Activated naive CD4-positive, alpha-beta T cell treated with anti-CD3 and anti-CD28 coated beads for 36 hours (primary cell): ENCODE measurements at regions of chr22 and their contacts with region 1.

Region 1: DNA sequence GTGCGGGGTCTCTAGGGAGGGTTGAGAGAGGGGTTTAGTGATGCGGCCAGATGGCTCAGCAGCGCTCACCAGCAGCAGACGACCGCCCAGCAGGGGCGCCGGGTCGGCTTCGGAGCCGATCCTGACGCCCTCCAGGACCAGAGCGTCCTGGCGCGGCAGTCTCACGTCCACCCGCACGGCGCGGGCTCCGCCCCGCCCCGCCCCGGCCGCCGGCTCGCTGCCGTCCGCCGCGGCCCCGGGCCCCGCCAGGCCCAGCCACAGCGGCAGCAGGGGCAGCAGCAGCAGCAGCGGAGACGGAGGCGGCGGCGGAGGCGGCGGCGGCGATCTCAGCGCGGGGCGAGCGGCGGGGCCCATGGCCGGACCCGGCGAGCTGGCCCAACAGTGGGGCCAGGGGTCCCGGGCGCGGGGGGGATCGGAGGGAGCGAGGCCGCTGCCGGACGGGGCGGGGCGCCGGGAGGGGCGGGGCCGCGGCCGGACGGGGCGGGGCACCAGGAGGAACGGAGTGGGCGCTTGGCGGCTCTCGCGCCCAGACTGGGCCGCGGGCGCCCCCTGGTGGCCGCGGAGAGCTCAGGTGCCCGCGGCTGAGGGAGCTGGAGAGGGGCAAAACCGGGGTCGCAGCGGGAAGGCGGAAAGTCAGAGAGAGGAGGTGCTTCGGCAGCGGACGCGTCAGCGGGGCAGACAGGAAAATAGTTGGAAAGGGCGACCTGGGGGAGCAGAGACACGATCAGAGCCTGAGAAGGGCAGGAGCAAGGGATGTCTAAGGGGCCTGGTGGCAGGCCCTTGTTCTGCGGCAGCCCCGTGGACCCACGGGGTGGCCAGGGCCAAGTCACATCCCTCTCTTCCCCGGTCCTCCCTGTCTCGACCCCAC is at the start of gene RNF215:
- DNase-seq: peak; percentile 68
- H3K4me3 Mint-ChIP-seq: peak within 1 kb of the TSS; percentile 74
- H3K27ac Mint-ChIP-seq: no peak within 1 kb of the TSS
- H3K4me1 Mint-ChIP-seq: peaks cover 13% of the 10 kb centered on the region
- H3K27me3 Mint-ChIP-seq: no peaks in the 10 kb centered on the region
- total RNA-seq, gene RNF215: 2.8 to 3.9 TPM

Region 2: DNA sequence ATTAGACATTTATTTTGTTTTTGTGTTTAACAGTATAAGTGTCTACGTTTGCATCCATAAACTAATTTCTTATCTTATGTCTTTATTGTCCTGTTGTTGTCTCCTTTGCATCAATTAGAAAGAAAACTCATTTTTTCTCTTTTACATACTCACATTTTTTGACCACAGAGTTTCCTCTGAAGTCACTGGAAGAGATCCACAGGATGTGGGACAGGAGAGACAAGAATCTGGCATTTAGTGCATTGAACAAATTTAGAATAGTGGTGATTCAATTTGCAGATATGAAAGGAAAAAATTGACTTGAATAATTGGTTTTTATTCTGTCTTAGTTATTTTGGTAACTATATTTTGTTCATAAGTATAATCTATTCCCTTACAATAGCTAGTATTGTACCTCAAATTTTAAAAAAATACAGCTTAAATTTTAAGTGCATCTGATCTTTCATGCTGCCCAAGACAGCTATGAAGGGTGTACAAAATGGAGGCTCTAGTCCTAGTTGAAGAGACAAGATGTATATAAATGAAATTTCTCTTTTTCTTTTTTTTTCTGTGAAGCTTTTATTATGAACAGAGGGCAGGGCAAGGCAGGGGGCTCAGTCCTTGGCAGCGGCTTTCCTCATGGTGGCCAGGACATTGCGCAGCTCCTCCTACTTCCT is 282.6 kb before region 1 on chr22:
- CTCF ChIA-PET with region 1: interaction called, 6 read pairs
- intact Hi-C with region 1: loop called (anchors 2 kb)
- DNase-seq: no peak
- H3K4me3 Mint-ChIP-seq: no peak overlapping the region
- H3K27ac Mint-ChIP-seq: peak overlapping the region; percentile 24
- H3K4me1 Mint-ChIP-seq: peaks cover 38% of the 10 kb centered on the region
- H3K27me3 Mint-ChIP-seq: no peaks in the 10 kb centered on the region

Region 3: GRCh38 chr22:30356449-30357235 is 30.6 kb before region 1 on chr22 and contains the starts of genes CCDC157 and SF3A1:
- CTCF ChIA-PET with region 1: interaction called, 7 read pairs
- intact Hi-C with region 1: loop called (anchors 2 kb)
- DNase-seq: peak; percentile 87
- H3K4me3 Mint-ChIP-seq: peak within 1 kb of the TSS; percentile 92
- H3K27ac Mint-ChIP-seq: peak within 1 kb of the TSS; percentile 84
- H3K4me1 Mint-ChIP-seq: peaks cover 50% of the 10 kb centered on the region
- H3K27me3 Mint-ChIP-seq: no peaks in the 10 kb centered on the region
- total RNA-seq, gene CCDC157: 1.1 to 1.5 TPM
- total RNA-seq, gene SF3A1: 274 to 276 TPM

Region 4: GRCh38 chr22:30423982-30424963 is 37.1 kb after region 1 on chr22:
- CTCF ChIA-PET with region 1: interaction called, 66 read pairs
- intact Hi-C with region 1: loop called (anchors 1 kb)
- DNase-seq: peak; percentile 99
- H3K4me3 Mint-ChIP-seq: peak overlapping the region; percentile 97
- H3K27ac Mint-ChIP-seq: peak overlapping the region; percentile 96
- H3K4me1 Mint-ChIP-seq: peaks cover 50% of the 10 kb centered on the region
- H3K27me3 Mint-ChIP-seq: no peaks in the 10 kb centered on the region

Region 5: DNA sequence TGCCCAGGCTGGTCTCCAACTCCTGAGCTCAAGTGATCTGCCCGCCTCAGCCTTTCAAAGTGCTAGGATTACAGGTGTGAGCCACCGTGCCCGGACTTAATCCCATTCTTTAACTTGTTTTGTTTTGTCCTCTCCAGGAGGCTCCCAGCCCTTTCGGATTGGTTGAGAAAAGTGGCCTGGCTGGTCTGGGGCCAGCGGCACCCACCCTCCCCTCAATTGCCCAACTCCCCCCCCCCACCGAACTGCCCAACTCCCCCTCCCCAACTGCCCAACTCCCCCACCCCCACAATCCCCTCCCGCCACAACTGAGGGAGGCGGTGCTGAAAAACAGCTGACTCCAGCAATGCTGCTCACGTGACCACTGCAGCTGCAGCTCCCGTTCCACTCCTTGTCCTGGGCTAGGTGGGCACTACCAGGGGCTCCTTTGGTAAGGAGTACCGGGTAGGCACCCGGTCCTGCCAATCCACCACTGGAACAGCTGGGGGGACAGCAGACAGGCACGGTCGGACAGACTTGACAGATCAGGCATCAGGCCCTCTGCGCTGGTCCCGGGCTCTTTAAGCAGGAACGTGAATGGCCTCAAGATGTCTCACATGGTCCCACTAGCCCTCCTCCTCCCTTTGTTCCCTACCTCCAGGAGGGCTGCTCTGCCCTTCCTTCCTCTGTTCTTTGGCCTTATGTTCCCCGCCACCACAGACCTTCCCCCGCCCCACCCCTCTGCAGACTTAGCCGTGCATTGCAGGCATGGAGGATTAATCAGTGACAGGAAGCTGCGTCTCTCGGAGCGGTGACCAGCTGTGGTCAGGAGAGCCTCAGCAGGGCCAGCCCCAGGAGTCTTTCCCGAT is 219.5 kb after region 1 on chr22 and contains the start of gene TCN2:
- CTCF ChIA-PET with region 1: interaction called, 4 read pairs
- intact Hi-C with region 1: loop called (anchors 2 kb)
- DNase-seq: peak; percentile 78
- H3K4me3 Mint-ChIP-seq: peak within 1 kb of the TSS; percentile 74
- H3K27ac Mint-ChIP-seq: no peak within 1 kb of the TSS
- H3K4me1 Mint-ChIP-seq: peaks cover 33% of the 10 kb centered on the region
- H3K27me3 Mint-ChIP-seq: no peaks in the 10 kb centered on the region
- total RNA-seq, gene TCN2: 0.19 to 0.22 TPM